Activated naive CD4-positive, alpha-beta T cell treated with anti-CD3 and anti-CD28 coated beads for 36 hours (primary cell): ENCODE measurements at regions of chrX and their contacts with region 1.

Region 1: DNA sequence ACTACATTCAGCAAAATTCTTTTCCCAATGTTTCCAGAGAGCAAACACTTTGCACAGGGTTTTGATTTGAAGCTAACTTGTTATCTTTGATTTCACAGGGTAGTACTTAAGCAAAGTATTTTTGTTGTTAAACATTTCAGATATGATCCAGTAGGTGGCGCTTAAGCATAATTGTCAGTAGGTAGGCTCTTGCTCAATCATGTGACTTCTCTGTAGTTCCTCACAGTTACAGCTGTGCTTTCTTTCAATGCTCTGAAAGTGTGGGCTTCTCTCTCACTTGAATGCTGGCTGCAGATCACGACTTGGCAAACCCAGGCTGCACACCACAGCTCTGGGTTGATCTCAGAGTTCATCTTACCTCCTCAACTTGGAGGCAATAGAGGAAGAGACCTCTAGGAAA is 1016.5 kb downstream of the SH3BGRL start:
- DNase-seq: no peak
- H3K4me3 Mint-ChIP-seq: no peak overlapping the region
- H3K27ac Mint-ChIP-seq: no peak overlapping the region
- H3K4me1 Mint-ChIP-seq: peaks cover 2% of the 10 kb centered on the region
- H3K27me3 Mint-ChIP-seq: no peaks in the 10 kb centered on the region

Region 2: DNA sequence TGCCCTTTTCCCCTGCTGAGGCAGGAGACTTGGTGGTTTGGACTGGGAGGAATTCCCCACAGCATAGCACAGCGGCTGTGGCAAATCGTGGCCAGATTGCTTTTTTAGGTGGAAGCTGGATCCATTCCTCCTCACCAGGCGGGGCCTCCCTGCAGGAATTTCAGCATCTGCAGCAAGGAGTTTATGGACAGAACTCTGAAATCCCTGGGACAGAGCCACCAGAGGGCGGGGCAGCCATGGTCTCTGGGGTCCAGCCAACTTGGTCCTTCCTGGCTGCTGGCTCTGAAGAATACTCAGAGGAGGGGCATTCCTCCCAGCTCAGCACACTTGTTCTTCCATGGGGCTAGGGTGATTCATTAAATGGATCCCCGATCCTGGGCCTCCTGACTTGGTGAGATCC is 222.2 kb before region 1 on chrX:
- CTCF ChIA-PET with region 1: no interaction called
- intact Hi-C with region 1: no loop called
- DNase-seq: no peak
- H3K4me3 Mint-ChIP-seq: no peak overlapping the region
- H3K27ac Mint-ChIP-seq: no peak overlapping the region
- H3K4me1 Mint-ChIP-seq: no peaks in the 10 kb centered on the region
- H3K27me3 Mint-ChIP-seq: no peaks in the 10 kb centered on the region

Region 3: GRCh38 chrX:82589410-82589809 is 371.0 kb after region 1 on chrX:
- CTCF ChIA-PET with region 1: no interaction called
- intact Hi-C with region 1: no loop called
- DNase-seq: no peak
- H3K4me3 Mint-ChIP-seq: no peak overlapping the region
- H3K27ac Mint-ChIP-seq: no peak overlapping the region
- H3K4me1 Mint-ChIP-seq: no peaks in the 10 kb centered on the region
- H3K27me3 Mint-ChIP-seq: no peaks in the 10 kb centered on the region

Region 4: GRCh38 chrX:82676386-82676785 is 458.0 kb after region 1 on chrX:
- CTCF ChIA-PET with region 1: no interaction called
- intact Hi-C with region 1: loop called (anchors 10 kb)
- DNase-seq: no peak
- H3K4me3 Mint-ChIP-seq: no peak overlapping the region
- H3K27ac Mint-ChIP-seq: no peak overlapping the region
- H3K4me1 Mint-ChIP-seq: no peaks in the 10 kb centered on the region
- H3K27me3 Mint-ChIP-seq: no peaks in the 10 kb centered on the region